Aorta (tissue), 5 donors: ENCODE measurements at regions of chr10 and their contacts with region 1.

Region 1: DNA sequence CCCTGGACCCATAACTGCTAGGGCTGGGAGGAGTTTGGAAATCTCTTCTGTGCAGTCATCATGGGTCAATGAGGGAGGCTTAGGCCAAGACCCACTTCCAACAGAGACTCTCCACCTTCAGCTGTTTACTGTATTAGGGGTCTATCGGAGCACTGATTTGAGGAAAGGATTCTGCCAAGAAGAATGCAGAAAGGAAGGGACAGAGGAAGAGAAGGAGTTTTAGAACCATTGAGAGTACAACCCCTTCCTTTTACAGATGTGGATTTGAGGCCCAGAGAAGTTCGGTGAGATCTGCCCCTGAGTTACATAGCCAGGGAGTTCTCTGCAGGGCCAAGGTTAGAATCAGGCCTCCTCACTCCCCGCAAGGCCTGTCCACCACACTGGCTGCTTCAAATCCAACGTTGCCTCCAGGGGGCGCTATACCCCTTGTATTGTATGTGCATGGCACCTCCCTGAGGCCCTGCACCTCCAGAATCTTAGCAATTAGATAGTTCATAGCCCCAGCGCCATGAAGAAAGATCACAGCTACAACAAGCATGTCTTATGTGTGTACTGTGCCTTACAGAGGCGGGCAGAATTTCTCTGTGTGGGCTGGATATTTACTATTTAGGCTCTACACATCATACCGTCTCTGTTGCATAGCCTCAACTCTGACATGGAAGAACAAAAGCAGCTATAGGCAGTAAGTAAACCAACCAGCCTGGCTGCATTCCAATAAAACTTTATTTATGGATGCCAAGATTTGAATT is 246.8 kb downstream of the SKIDA1 start:
- DNase-seq: peak; percentile 95 to 97
- ATAC-seq: peak; percentile 92
- H3K4me3 ChIP-seq: no peak overlapping the region
- H3K27ac ChIP-seq: no peak overlapping the region
- H3K4me1 ChIP-seq: no peaks in the 10 kb centered on the region
- H3K27me3 ChIP-seq: no peaks in the 10 kb centered on the region

Region 2: GRCh38 chr10:21355561-21356011 is 76.9 kb after region 1 on chr10:
- intact Hi-C with region 1: no loop called
- DNase-seq: no peak
- ATAC-seq: no peak
- H3K4me3 ChIP-seq: no peak overlapping the region
- H3K27ac ChIP-seq: no peak overlapping the region
- H3K4me1 ChIP-seq: no peaks in the 10 kb centered on the region
- H3K27me3 ChIP-seq: no peaks in the 10 kb centered on the region

Region 3: GRCh38 chr10:21399392-21400035 is 120.8 kb after region 1 on chr10:
- intact Hi-C with region 1: no loop called
- DNase-seq: no peak
- ATAC-seq: no peak
- H3K4me3 ChIP-seq: no peak overlapping the region
- H3K27ac ChIP-seq: no peak overlapping the region
- H3K4me1 ChIP-seq: no peaks in the 10 kb centered on the region
- H3K27me3 ChIP-seq: no peaks in the 10 kb centered on the region

Region 4: DNA sequence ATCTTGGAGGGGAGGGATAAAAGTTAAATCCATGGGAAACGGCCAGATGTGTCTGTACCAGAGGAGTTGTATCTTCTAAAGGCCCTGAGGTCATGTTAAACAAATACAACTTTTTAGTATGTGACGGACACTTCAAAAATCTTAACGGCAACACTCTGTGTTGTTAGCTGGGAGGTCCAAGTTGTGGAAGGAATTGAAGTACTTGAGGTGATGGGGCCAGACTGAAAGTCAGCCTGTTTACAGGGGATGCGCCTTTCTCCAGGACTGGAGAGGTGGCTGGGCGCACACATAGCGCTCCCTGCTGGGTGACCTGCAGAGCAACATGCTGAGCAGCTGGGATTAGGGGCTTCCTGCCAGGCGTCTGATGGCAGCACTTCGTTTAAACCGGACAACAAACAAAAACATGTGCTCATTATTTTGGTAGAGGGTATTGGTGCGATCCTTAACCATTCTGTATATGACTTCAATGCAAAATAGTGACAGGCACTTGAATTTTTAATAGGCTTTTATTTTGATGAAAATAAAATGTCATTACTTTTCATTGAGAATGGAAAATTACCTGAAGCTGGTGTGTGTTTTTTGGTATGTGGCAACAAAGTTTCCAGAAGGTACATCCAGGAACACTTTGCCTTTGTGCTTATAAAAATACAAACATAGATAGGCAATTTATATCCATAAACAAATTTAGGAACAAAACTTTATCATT is 453.6 kb after region 1 on chr10:
- intact Hi-C with region 1: loop called in 1 of 2 experiments (anchors 10 kb)
- DNase-seq: peak in 1 of 2 donors; percentile 58
- ATAC-seq: peak; percentile 87
- H3K4me3 ChIP-seq: no peak overlapping the region
- H3K27ac ChIP-seq: no peak overlapping the region
- H3K4me1 ChIP-seq: no peaks in the 10 kb centered on the region
- H3K27me3 ChIP-seq: no peaks in the 10 kb centered on the region

Region 5: DNA sequence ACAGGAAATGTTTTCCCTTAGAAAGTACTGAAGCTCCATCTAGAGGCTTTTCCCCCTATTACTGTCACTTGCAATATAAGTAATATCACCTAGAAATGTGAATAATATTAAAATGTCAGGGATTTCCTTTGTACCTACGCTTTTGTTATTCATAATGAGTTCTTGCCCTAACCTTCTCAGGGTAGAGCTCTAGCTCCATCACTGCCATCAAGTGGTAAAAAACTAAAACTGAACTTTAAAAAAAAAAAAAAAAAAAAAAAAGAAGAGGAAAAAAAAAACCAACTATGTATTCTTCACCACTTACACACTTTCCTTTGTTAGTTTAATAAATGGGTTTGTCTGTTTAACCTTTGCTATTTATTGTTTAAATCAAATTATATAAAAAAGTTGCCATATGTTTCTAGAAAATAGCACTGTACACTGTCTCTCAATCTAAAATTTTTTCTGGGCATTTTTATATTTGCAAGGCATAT is 675.0 kb after region 1 on chr10:
- intact Hi-C with region 1: loop called in 1 of 2 experiments (anchors 10 kb)
- DNase-seq: no peak
- ATAC-seq: no peak
- H3K4me3 ChIP-seq: no peak overlapping the region
- H3K27ac ChIP-seq: no peak overlapping the region
- H3K4me1 ChIP-seq: no peaks in the 10 kb centered on the region
- H3K27me3 ChIP-seq: no peaks in the 10 kb centered on the region